ENCODE measurements at regions of chr5 and their contacts with region 1.

Region 1: GRCh38 chr5:44847206-44847852 is 38.6 kb downstream of the MRPS30 start:
- DNase-seq: no peak
- ATAC-seq: no peak
- H3K4me3 ChIP-seq: no peak overlapping the region
- H3K27ac ChIP-seq: no peak overlapping the region
- H3K4me1 ChIP-seq: no peaks in the 10 kb centered on the region
- H3K27me3 ChIP-seq: no peaks in the 10 kb centered on the region
- CTCF ChIP-seq: no peak

Region 2: DNA sequence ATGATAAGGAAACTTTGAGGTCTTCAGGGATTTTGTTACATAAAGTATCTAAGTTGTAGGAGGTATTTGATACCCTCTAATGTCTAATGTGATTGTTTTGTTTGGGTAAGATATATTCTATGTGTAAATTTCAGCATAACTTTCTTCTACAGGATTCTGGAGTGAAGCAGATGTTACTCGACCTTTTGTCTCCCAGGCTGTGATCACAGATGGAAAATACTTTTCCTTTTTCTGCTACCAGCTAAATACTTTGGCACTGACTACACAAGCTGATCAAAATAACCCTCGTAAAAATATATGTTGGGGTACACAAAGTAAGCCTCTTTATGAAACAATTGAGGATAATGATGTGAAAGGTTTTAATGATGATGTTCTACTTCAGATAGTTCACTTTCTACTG is 32.6 kb before region 1 on chr5:
- CTCF ChIA-PET with region 1: no interaction called
- POLR2A ChIA-PET with region 1: interaction called, 14 read pairs
- in situ Hi-C with region 1: no loop called
- intact Hi-C with region 1: no loop called
- DNase-seq: no peak
- ATAC-seq: no peak
- H3K4me3 ChIP-seq: no peak overlapping the region
- H3K27ac ChIP-seq: no peak overlapping the region
- H3K4me1 ChIP-seq: peaks cover 7% of the 10 kb centered on the region; the same call in 1 of the 2 replicates
- H3K27me3 ChIP-seq: no peaks in the 10 kb centered on the region
- CTCF ChIP-seq: no peak

Region 3: DNA sequence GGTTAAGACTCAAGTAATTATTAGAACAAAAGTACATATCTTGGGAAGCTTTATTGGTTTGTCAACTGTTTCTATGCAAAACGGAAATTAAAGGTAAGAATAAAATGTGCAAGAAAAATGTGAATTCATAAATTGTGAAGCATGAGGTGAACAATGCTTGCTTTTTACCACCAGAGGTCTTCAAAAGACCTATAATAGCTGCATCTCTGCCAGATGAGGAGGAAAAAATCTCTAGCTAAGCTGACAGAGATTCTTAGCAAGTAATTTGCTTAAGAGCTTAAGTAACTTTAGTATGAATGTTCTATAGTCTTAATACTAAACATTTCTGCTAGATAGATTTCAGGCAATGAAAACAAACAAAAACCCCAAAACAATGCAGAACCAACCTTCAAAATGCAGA is 15.5 kb after region 1 on chr5:
- CTCF ChIA-PET with region 1: no interaction called
- POLR2A ChIA-PET with region 1: no interaction called
- in situ Hi-C with region 1: no loop called
- intact Hi-C with region 1: no loop called
- DNase-seq: no peak
- ATAC-seq: no peak
- H3K4me3 ChIP-seq: no peak overlapping the region
- H3K27ac ChIP-seq: no peak overlapping the region
- H3K4me1 ChIP-seq: no peaks in the 10 kb centered on the region
- H3K27me3 ChIP-seq: no peaks in the 10 kb centered on the region
- CTCF ChIP-seq: peak; percentile 45; the same call in 1 of the 2 replicates

Measured in Panc1 (cell line).